MCF 10A (cell line): ENCODE measurements at regions of chr15 and their contacts with region 1.

Region 1: DNA sequence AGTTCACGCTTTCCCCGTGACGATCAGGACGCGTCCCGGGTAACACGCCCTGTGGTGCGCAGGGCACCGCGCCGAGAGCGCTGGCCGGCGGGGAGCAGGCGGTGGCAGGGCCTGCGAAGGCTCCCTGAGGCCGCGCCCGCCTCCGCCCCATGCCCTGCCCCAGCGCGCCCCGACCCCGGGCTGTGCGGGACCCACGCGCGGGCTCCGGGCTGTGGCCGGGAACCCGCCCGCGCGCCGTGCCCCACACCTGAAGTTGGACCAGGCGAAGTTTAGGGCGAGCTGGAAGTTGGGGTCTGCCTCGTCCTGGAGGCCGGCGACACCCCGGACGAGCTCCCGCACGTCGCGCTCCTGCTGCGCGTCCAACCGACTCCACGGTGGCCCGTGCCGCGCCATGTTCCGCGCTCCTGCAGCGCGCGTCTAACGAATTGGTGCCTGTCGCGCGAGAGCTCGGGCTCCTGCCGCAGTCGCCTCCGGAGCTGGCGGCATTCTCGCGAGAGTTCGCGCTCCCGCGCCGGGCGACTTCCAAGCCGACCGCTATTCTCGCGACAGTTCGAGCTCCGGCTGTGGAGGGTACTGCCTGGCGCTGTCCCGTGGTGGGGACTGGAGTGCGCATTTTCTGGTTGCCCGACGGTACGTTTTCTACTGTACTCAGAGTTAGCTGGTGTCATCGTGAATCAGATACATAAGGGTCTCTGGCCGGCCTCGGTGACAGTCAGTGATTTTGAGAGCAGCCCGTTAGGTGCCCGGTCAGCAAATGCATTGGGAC is at the start of gene TUBGCP5:
- DNase-seq: peak; percentile 95
- H3K4me3 Mint-ChIP-seq: peak within 1 kb of the TSS; percentile 77
- H3K27ac Mint-ChIP-seq: peak within 1 kb of the TSS; percentile 78
- H3K4me1 Mint-ChIP-seq: peaks cover 6% of the 10 kb centered on the region
- H3K27me3 Mint-ChIP-seq: no peaks in the 10 kb centered on the region
- CTCF ChIP-seq: no peak
- total RNA-seq, gene TUBGCP5: 15.7 and 18.2 TPM in 2 replicates

Region 2: DNA sequence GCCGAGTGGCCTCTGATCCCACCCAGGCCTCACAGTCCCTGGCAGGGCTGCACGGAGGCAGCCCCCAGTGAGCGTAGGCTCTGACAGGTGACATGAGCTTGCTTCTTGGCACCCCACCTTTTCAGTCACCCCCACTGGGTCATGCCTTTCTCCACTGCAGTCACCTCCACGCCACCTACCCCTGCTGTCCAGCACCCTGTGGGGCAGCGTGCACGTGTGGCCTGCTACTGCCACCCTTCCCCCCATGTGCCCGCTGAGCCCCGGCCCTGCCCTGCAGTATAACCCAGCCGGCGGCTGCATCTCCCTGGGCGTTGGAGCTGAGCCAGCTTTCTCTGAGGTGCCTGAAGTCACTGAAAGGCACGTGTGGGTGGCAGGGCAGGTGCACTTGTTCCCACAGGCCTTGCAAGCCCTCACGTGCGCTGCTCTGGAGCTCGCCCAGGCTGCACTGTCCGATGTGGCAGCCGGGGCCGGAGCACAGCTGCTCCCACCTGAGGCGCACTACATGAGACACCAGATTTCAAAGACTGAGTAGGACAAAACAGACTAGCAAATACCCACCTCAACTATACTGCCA is 135.3 kb before region 1 on chr15:
- CTCF ChIA-PET with region 1: no interaction called
- POLR2A ChIA-PET with region 1: no interaction called
- intact Hi-C with region 1: no loop called
- DNase-seq: no peak
- H3K4me3 Mint-ChIP-seq: no peak overlapping the region
- H3K27ac Mint-ChIP-seq: no peak overlapping the region
- H3K4me1 Mint-ChIP-seq: no peaks in the 10 kb centered on the region
- H3K27me3 Mint-ChIP-seq: no peaks in the 10 kb centered on the region
- CTCF ChIP-seq: no peak

Region 3: DNA sequence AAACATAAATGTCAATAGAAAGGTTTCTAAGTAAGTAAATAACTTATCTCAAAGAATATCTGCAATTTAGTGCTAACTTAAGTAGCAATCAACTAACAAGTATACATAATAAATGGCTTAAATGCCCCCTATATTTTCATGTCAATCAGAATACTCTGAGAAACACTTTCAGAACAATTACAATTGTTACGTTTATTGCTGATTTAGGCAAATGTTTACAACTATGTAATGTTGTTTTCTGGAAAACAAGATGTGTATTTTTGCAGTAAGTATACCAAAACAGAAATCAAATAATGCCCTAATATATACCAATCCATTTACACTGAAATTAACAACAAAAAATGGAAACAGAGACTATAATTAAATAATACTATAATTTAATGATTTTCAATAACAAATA is 13.1 kb before region 1 on chr15:
- CTCF ChIA-PET with region 1: interaction called, 36 read pairs
- POLR2A ChIA-PET with region 1: interaction called, 19 read pairs
- intact Hi-C with region 1: no loop called
- DNase-seq: no peak
- H3K4me3 Mint-ChIP-seq: no peak overlapping the region
- H3K27ac Mint-ChIP-seq: no peak overlapping the region
- H3K4me1 Mint-ChIP-seq: no peaks in the 10 kb centered on the region
- H3K27me3 Mint-ChIP-seq: no peaks in the 10 kb centered on the region
- CTCF ChIP-seq: no peak

Region 4: GRCh38 chr15:23467110-23467600 is 427.8 kb after region 1 on chr15:
- CTCF ChIA-PET with region 1: interaction called, 41 read pairs
- POLR2A ChIA-PET with region 1: interaction called, 6 read pairs
- intact Hi-C with region 1: loop called (anchors 5 kb)
- DNase-seq: peak; percentile 23
- H3K4me3 Mint-ChIP-seq: no peak overlapping the region
- H3K27ac Mint-ChIP-seq: no peak overlapping the region
- H3K4me1 Mint-ChIP-seq: no peaks in the 10 kb centered on the region
- H3K27me3 Mint-ChIP-seq: peaks cover 17% of the 10 kb centered on the region
- CTCF ChIP-seq: peak; percentile 54